ENCODE measurements at regions of chr3 and their contacts with region 1.

Region 1: DNA sequence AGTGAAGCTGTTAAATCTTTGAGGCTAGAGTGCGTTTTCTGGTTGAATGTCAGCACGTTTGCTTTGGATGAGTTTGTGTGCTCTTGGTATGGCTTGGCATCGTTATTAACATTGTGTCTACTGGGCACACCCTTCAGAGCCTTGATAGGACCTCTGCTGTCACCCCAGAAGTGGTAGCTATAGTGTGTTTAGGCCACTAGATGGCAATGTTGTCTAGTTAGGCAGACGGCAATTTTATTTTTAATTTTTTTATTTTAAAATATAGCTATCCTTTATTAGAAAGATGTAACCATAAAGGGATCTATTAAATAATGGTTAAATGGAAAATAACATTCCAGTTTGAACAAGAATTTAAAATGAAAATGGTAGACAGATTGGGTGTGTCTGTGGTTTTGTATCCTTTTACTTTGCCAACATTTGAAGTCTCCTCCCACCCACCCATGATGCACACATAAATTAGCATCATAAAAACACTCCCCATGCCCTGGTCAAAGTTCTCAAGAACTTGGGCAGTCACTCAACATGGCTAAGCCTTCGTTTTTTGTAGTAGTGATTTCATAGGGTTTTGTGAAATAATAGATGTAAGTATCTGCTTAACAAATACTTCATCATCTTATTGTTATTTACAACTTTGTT is 200.7 kb downstream of the KCNH8 start:
- DNase-seq: peak; percentile 6
- CTCF ChIP-seq: peak; percentile 77

Region 2: DNA sequence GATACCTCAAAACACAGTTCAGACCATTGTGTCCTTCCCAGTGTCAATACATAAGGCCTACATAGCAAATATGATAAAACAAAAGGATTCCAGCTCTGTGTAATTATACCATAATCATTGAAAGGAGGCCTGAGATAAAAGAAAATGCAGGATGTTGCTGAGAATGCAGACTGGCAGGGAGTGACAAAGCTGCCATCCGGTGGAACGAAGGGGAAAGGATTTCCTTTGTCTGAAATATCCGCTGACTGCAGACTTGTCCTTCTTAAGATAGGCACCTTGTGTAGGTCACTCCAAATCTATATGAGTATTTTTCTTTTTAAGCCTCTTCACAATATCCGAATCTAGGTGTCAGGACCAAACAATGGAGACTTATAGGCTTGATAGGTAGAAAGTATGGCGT is 92.7 kb before region 1 on chr3:
- in situ Hi-C with region 1: no loop called
- DNase-seq: no peak
- CTCF ChIP-seq: no peak

Region 3: GRCh38 chr3:19543212-19543841 is 194.3 kb after region 1 on chr3:
- in situ Hi-C with region 1: loop called (anchors 10 kb)
- DNase-seq: peak; percentile 7
- CTCF ChIP-seq: peak; percentile 76

Region 4: DNA sequence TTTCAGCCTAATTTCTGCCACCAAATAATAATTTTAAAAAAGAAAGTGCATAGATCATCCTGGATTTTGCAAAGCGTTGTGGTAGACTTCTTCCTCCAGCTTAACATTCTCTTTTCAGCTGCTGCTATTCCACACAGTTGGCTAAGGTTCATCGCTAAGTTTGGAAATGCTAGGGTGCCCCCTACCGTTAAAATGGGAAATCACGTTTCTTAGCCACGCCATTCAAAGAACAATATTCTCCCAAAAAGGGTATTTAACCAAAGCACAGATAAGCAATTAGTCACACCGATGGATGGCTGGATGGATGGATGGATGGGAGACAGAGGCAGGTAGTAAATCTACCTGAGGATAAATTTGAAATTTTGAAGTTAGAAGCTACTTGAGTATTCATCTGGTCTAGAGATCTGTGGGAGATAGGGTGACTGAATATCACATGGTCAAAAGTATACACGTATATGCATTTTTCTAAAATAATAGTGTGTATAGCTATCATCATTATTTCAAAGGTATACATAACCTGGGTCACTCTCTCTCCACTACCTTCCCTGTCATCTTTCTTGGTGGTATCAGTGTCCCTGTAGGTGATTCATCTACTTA is 517.8 kb after region 1 on chr3:
- in situ Hi-C with region 1: loop called (anchors 25 kb)
- DNase-seq: peak; percentile 56
- CTCF ChIP-seq: peak; percentile 82